WTC11 (cell line): ENCODE measurements at regions of chr2 and their contacts with region 1.

Region 1: DNA sequence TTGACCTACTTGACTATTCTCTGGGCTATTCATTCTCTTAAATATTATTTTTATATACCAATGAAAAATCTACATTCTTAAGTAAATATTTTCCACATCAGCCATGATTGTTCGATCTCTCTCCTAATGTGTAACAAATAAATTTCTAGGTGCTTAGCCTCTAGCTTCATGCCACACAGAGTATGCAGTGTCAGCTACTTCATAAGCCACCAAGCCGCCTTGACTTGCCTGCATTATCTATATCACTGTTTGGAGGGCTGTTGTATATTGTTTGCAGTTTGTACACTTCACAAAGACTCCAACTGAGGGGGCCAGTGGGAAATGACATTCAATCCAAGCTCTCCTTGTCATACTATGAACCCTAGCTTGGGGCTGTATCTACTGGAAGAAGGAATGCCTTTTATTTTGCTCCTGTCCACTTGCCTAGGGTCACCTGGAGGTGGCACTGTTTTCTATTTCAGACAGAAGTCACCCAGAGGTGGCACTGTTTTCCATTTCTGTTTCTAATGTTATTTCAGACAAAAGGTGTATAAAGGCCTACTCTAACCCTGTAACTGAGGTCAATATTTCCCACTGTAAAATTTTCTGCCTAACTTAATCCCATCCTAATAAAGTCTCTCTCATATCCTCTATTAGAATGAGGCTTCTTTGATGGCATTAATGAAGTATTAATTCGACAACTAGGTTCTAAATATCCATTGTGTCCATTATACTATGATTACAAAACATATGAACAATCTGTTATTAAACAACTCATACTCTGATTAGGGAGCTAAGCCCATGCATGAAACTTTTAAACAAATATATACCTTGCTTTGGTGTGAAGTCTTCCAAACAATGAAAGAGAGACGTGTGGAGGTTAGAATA is 36.4 kb downstream of the COL5A2 start:
- DNase-seq: peak; percentile 50
- ATAC-seq: peak; percentile 100
- H3K4me3 Mint-ChIP-seq: no peak overlapping the region
- H3K27ac Mint-ChIP-seq: no peak overlapping the region
- H3K4me1 Mint-ChIP-seq: peaks cover 7% of the 10 kb centered on the region
- H3K27me3 Mint-ChIP-seq: no peaks in the 10 kb centered on the region
- CTCF ChIP-seq: peak; percentile 66

Region 2: GRCh38 chr2:189129971-189130370 is 13.2 kb before region 1 on chr2:
- CTCF ChIA-PET with region 1: interaction called, 17 read pairs
- POLR2A ChIA-PET with region 1: no interaction called
- DNase-seq: no peak
- ATAC-seq: no peak
- H3K4me3 Mint-ChIP-seq: no peak overlapping the region
- H3K27ac Mint-ChIP-seq: no peak overlapping the region
- H3K4me1 Mint-ChIP-seq: peaks cover 11% of the 10 kb centered on the region
- H3K27me3 Mint-ChIP-seq: no peaks in the 10 kb centered on the region
- CTCF ChIP-seq: no peak

Region 3: DNA sequence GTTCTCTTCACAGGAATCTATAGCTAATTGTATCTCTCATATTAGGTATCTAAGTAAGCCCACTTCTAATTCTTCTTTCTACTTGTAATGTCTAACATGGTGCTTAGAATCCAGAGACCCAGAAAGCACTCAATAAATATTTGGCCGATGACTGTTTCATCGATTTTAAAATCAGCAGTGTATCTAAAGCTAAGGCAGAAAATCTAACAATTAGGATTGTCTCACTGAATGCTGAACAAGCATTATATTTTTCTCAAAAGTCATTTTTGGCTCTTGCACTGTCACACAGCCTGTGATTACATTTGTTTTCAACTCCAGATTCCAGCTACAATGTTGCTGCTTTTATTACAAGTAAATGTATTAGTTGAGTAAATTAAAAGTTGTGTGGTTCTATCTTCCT is 16.1 kb after region 1 on chr2:
- CTCF ChIA-PET with region 1: interaction called, 15 read pairs
- POLR2A ChIA-PET with region 1: no interaction called
- DNase-seq: no peak
- ATAC-seq: no peak
- H3K4me3 Mint-ChIP-seq: no peak overlapping the region
- H3K27ac Mint-ChIP-seq: no peak overlapping the region
- H3K4me1 Mint-ChIP-seq: peaks cover 26% of the 10 kb centered on the region
- H3K27me3 Mint-ChIP-seq: no peaks in the 10 kb centered on the region
- CTCF ChIP-seq: no peak

Region 4: DNA sequence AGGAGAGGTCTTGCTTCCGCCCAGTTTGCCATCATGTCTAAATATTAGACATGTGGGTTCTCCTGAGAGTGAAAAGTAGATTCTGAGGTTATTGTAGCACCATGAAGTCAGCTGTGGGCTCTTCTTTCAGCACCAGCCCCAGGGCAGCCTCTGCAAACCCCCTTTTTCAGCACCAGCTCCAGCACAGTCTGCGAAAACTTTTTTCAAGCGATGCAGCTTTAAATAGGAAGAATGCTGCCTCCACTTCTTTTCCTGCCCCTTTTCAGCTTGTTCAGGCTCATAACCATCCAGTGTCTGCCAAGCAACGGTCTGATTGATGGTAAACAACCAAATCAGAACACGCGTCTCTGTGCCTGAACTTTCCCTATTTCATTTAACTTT is 36.4 kb after region 1 on chr2 and contains the start of gene COL5A2:
- CTCF ChIA-PET with region 1: interaction called, 22 read pairs
- POLR2A ChIA-PET with region 1: no interaction called
- DNase-seq: no peak
- ATAC-seq: peak; percentile 82
- H3K4me3 Mint-ChIP-seq: peak within 1 kb of the TSS; percentile 79
- H3K27ac Mint-ChIP-seq: peak within 1 kb of the TSS; percentile 92
- H3K4me1 Mint-ChIP-seq: peaks cover 31% of the 10 kb centered on the region
- H3K27me3 Mint-ChIP-seq: no peaks in the 10 kb centered on the region
- CTCF ChIP-seq: no peak
- total RNA-seq, gene COL5A2: 16.0 to 18.4 TPM (median 17.2 TPM) in 3 replicates